ENCODE measurements at regions of chr6 and their contacts with region 1.

Region 1: GRCh38 chr6:22025468-22026160 is 271.2 kb downstream of the PRL start:
- DNase-seq: peak; percentile 76
- ATAC-seq: peak; percentile 70
- H3K4me3 ChIP-seq: peak overlapping the region; percentile 54
- H3K27ac ChIP-seq: peak overlapping the region; percentile 96
- H3K4me1 ChIP-seq: peaks cover 38% of the 10 kb centered on the region
- H3K27me3 ChIP-seq: no peaks in the 10 kb centered on the region
- CTCF ChIP-seq: no peak
- EP300 ChIP-seq: peak in 1 of 2 experiments; percentile 53; a peak in 1 of 4 replicates
- POLR2A ChIP-seq: no peak
- RAD21 ChIP-seq: no peak; the same call in 1 of the 2 replicates

Region 2: DNA sequence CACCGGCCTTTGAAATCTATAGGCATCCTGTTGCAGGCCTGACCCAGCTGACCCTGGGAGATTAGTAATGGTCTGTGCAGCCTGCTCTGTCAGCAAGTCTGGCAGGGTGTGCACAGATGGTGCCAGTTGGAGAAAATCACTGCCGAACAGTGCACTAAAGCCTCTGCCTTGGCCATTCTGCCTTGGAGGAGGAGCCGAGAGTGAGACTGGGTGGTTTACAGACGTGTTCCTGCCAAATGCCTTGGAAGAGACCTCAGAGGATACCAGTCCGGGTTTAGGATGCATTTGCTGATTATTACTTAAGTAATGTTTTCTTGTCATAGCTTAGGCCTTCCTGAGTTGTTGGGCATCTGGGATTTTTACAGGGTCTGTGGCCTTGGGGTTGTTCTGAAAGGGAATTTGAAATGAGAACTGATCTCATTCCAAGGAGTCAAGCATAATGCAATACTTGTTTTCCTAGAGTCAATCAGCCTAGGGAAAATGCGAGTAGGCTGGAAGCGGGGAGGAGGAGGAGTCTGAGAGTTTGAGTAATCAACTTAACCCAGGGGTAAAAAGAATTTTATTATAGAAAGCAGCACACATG is 140.0 kb before region 1 on chr6:
- CTCF ChIA-PET with region 1: no interaction called
- POLR2A ChIA-PET with region 1: no interaction called
- RAD21 ChIA-PET with region 1: no interaction called
- SMC1A ChIA-PET with region 1: no interaction called
- in situ Hi-C with region 1: no loop called
- intact Hi-C with region 1: no loop called
- DNase-seq: no peak
- ATAC-seq: no peak
- H3K4me3 ChIP-seq: no peak overlapping the region
- H3K27ac ChIP-seq: no peak overlapping the region
- H3K4me1 ChIP-seq: no peaks in the 10 kb centered on the region
- H3K27me3 ChIP-seq: no peaks in the 10 kb centered on the region
- CTCF ChIP-seq: no peak
- EP300 ChIP-seq: no peak
- POLR2A ChIP-seq: no peak
- RAD21 ChIP-seq: no peak

Region 3: GRCh38 chr6:22036275-22036674 is 10.7 kb after region 1 on chr6:
- CTCF ChIA-PET with region 1: interaction called, 6 read pairs
- POLR2A ChIA-PET with region 1: interaction called, 8 read pairs
- RAD21 ChIA-PET with region 1: interaction called, 40 read pairs
- SMC1A ChIA-PET with region 1: interaction called, 55 read pairs
- in situ Hi-C with region 1: no loop called
- intact Hi-C with region 1: no loop called
- DNase-seq: peak; percentile 64
- ATAC-seq: peak; percentile 89
- H3K4me3 ChIP-seq: no peak overlapping the region
- H3K27ac ChIP-seq: no peak overlapping the region
- H3K4me1 ChIP-seq: no peaks in the 10 kb centered on the region; the same call in 1 of the 2 replicates
- H3K27me3 ChIP-seq: no peaks in the 10 kb centered on the region
- CTCF ChIP-seq: no peak
- EP300 ChIP-seq: no peak
- POLR2A ChIP-seq: no peak
- RAD21 ChIP-seq: no peak

Region 4: GRCh38 chr6:22062807-22063408 is 37.3 kb after region 1 on chr6:
- CTCF ChIA-PET with region 1: interaction called, 3 read pairs
- POLR2A ChIA-PET with region 1: interaction called, 6 read pairs
- RAD21 ChIA-PET with region 1: interaction called, 26 read pairs
- SMC1A ChIA-PET with region 1: interaction called, 36 read pairs
- in situ Hi-C with region 1: no loop called
- intact Hi-C with region 1: loop called (anchors 2 kb)
- DNase-seq: peak; percentile 69
- ATAC-seq: peak; percentile 81
- H3K4me3 ChIP-seq: no peak overlapping the region
- H3K27ac ChIP-seq: peak overlapping the region; percentile 72
- H3K4me1 ChIP-seq: peaks cover 44% of the 10 kb centered on the region
- H3K27me3 ChIP-seq: no peaks in the 10 kb centered on the region
- CTCF ChIP-seq: no peak
- EP300 ChIP-seq: peak; percentile 73 to 78; a peak in 3 of 4 replicates
- POLR2A ChIP-seq: peak; percentile 58
- RAD21 ChIP-seq: no peak

Region 5: GRCh38 chr6:22068561-22069305 is 43.1 kb after region 1 on chr6:
- CTCF ChIA-PET with region 1: interaction called, 4 read pairs
- POLR2A ChIA-PET with region 1: interaction called, 5 read pairs
- RAD21 ChIA-PET with region 1: interaction called, 26 read pairs
- SMC1A ChIA-PET with region 1: interaction called, 36 read pairs
- in situ Hi-C with region 1: no loop called
- intact Hi-C with region 1: loop called (anchors 2 kb)
- DNase-seq: peak; percentile 64
- ATAC-seq: peak; percentile 82
- H3K4me3 ChIP-seq: no peak overlapping the region
- H3K27ac ChIP-seq: peak overlapping the region; percentile 55
- H3K4me1 ChIP-seq: peaks cover 24% of the 10 kb centered on the region
- H3K27me3 ChIP-seq: no peaks in the 10 kb centered on the region
- CTCF ChIP-seq: no peak
- EP300 ChIP-seq: peak; percentile 65 to 71; a peak in 3 of 4 replicates
- POLR2A ChIP-seq: no peak
- RAD21 ChIP-seq: no peak

Region 6: DNA sequence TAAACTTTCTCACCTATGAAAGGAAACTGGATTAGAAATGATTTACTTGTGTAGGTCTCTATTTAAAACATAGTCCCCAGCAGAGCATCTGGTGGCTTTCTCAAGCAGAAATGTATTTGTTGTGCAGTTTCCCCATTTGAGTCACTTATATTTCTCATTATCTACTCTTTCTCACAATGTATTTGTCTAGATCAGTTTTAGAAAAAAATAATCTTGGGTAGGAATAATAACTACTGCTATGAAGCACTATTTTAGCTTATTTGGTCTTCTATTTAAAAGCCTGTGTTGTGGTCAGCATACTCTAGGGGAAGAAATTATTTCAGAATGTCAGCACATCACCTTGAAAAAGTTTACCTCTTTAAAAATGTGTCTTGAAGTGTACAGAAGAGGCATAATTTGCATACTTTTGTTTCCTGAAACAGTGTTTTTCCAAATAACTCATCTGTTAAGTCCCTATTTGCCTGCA is 332.1 kb after region 1 on chr6:
- CTCF ChIA-PET with region 1: no interaction called
- POLR2A ChIA-PET with region 1: no interaction called
- RAD21 ChIA-PET with region 1: interaction called, 3 read pairs
- SMC1A ChIA-PET with region 1: no interaction called
- in situ Hi-C with region 1: no loop called
- intact Hi-C with region 1: loop called (anchors 5 kb)
- DNase-seq: peak; percentile 67
- ATAC-seq: peak; percentile 88
- H3K4me3 ChIP-seq: no peak overlapping the region
- H3K27ac ChIP-seq: peak overlapping the region; percentile 82
- H3K4me1 ChIP-seq: peaks cover 25% of the 10 kb centered on the region
- H3K27me3 ChIP-seq: no peaks in the 10 kb centered on the region
- CTCF ChIP-seq: no peak
- EP300 ChIP-seq: peak; percentile 48 to 57; a peak in 2 of 4 replicates
- POLR2A ChIP-seq: no peak
- RAD21 ChIP-seq: no peak

Region 7: DNA sequence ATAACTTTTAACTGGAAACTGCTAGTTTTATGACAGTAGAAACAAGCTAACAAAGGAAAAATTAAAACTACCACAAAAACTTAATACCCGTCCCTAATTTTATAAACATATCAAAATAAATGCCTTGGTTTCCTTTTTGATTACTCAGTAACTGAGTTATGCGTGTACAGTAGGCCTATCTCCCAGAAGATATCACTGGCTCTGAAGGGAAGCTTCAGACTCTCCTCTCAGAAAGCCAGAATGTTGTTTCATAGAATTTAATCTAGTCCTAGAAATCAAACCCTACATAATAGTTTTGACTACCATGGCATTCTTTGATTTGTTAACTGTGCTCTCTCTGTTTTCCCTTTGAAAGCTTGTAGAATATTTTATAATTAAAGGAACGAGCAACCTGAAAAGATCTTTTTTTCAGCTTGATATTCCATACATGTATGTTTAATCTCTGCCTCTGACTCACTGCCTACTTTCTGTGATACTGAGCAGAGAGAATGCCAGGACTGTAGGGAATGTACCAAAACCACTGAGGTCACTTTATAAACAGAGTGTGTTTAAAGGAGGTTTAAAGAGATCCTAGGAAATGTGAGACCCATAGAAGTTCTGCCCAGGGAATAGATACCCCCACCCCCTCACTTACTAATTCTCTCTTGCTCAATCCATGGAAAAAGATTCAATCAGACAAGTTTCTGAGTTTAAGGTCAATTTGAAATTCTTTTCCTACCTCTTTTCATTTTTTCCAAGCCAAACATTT is 855.2 kb after region 1 on chr6:
- CTCF ChIA-PET with region 1: no interaction called
- POLR2A ChIA-PET with region 1: no interaction called
- RAD21 ChIA-PET with region 1: no interaction called
- SMC1A ChIA-PET with region 1: no interaction called
- in situ Hi-C with region 1: no loop called
- intact Hi-C with region 1: loop called (anchors 10 kb)
- DNase-seq: no peak
- ATAC-seq: no peak
- H3K4me3 ChIP-seq: no peak overlapping the region
- H3K27ac ChIP-seq: no peak overlapping the region
- H3K4me1 ChIP-seq: no peaks in the 10 kb centered on the region
- H3K27me3 ChIP-seq: no peaks in the 10 kb centered on the region
- CTCF ChIP-seq: no peak
- EP300 ChIP-seq: no peak
- POLR2A ChIP-seq: no peak
- RAD21 ChIP-seq: no peak

Measured in GM12878 (cell line).